Activated CD8-positive, alpha-beta memory T cell treated with anti-CD3 and anti-CD28 coated beads, Interleukin-2, amount 10 ng/mL, durations not matched to agents 7 days and 5 days (primary cell): ENCODE measurements at regions of chr1 and their contacts with region 1.

Region 1: GRCh38 chr1:223748773-223749733 is 36.7 kb downstream of the CAPN2 start:
- DNase-seq: peak; percentile 67
- ATAC-seq: peak; percentile 75
- H3K4me3 Mint-ChIP-seq: peak overlapping the region; percentile 57
- H3K27ac Mint-ChIP-seq: peak overlapping the region; percentile 78
- H3K4me1 Mint-ChIP-seq: peaks cover 30% of the 10 kb centered on the region
- H3K27me3 Mint-ChIP-seq: no peaks in the 10 kb centered on the region

Region 2: DNA sequence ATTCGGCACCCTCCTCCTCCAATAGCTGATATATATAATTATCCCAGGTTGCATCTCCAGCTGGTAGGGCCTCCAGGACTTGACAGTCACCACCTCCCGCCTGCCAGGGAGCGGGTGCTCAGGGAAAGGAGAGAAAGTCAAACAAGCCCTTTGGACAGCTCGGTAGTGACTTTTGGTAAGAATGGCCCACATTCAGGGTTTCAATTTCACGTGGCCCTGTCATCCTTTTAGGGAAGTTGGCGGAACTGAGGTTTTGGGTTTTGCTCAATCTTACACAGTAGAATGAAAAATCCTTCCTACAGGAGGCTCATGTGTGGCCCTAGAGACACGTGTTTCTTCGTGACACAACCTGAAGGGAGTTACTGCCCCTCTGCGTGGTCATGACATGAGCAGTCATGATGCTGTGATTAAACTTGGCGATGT is 127.7 kb before region 1 on chr1:
- CTCF ChIA-PET with region 1: no interaction called
- DNase-seq: no peak
- ATAC-seq: peak; percentile 27
- H3K4me3 Mint-ChIP-seq: no peak overlapping the region
- H3K27ac Mint-ChIP-seq: no peak overlapping the region
- H3K4me1 Mint-ChIP-seq: peaks cover 8% of the 10 kb centered on the region
- H3K27me3 Mint-ChIP-seq: peaks cover 35% of the 10 kb centered on the region

Region 3: DNA sequence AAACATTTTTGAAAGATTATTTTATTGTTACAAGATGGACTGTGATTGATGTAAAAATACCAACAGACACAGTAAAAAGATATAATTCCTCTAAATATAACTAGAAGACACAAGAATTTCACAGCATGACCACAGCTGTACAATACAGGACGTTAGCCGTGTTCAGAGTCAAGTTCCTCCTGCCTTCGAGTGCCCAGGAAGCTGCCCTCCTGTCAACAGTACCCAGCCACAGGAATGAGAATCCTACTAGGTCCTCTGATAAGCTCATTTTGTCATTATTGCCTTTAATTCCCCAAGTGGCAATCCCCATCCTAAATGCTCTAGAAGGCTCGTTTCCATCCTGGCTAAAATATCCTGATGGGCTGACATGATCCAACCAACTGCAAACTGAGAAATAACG is 53.1 kb before region 1 on chr1:
- CTCF ChIA-PET with region 1: interaction called, 76 read pairs
- DNase-seq: no peak
- ATAC-seq: no peak
- H3K4me3 Mint-ChIP-seq: no peak overlapping the region
- H3K27ac Mint-ChIP-seq: no peak overlapping the region
- H3K4me1 Mint-ChIP-seq: peaks cover 17% of the 10 kb centered on the region
- H3K27me3 Mint-ChIP-seq: no peaks in the 10 kb centered on the region

Region 4: GRCh38 chr1:223712194-223712849 is 36.7 kb before region 1 on chr1 and contains the start of gene CAPN2:
- CTCF ChIA-PET with region 1: interaction called, 76 read pairs
- DNase-seq: peak; percentile 75
- ATAC-seq: peak; percentile 65
- H3K4me3 Mint-ChIP-seq: peak within 1 kb of the TSS; percentile 84
- H3K27ac Mint-ChIP-seq: peak within 1 kb of the TSS; percentile 96
- H3K4me1 Mint-ChIP-seq: peaks cover 53% of the 10 kb centered on the region
- H3K27me3 Mint-ChIP-seq: no peaks in the 10 kb centered on the region
- total RNA-seq, gene CAPN2: 183 to 255 TPM

Region 5: GRCh38 chr1:223726380-223727001 is 22.6 kb before region 1 on chr1:
- CTCF ChIA-PET with region 1: interaction called, 43 read pairs
- DNase-seq: peak; percentile 94
- ATAC-seq: peak; percentile 99
- H3K4me3 Mint-ChIP-seq: peak overlapping the region; percentile 49
- H3K27ac Mint-ChIP-seq: peak overlapping the region; percentile 89
- H3K4me1 Mint-ChIP-seq: peaks cover 79% of the 10 kb centered on the region
- H3K27me3 Mint-ChIP-seq: no peaks in the 10 kb centered on the region

Region 6: GRCh38 chr1:223759273-223759672 is 10.2 kb after region 1 on chr1:
- CTCF ChIA-PET with region 1: interaction called, 23 read pairs
- DNase-seq: no peak
- ATAC-seq: no peak
- H3K4me3 Mint-ChIP-seq: no peak overlapping the region
- H3K27ac Mint-ChIP-seq: no peak overlapping the region
- H3K4me1 Mint-ChIP-seq: no peaks in the 10 kb centered on the region
- H3K27me3 Mint-ChIP-seq: no peaks in the 10 kb centered on the region

Region 7: DNA sequence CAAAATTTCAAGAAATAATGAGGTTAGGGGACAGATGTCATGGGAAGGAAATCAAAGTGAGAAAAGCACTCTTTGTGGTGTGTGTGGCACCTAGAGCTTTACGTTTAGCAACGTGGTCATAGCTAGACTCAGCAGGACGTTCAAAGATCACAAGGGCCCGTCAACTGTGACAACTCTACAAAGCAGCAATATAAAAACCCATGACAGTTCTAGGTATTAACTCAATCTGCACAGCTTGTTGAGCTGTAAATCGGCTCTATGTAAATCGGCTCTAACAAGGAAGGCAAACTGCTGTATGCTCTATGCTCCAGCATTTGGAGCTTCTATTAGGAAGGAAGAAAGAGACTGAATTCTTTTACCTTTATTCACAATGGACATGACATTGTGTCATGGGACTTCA is 31.9 kb after region 1 on chr1:
- CTCF ChIA-PET with region 1: interaction called, 12 read pairs
- DNase-seq: no peak
- ATAC-seq: no peak
- H3K4me3 Mint-ChIP-seq: no peak overlapping the region
- H3K27ac Mint-ChIP-seq: peak overlapping the region; percentile 26
- H3K4me1 Mint-ChIP-seq: peaks cover 16% of the 10 kb centered on the region
- H3K27me3 Mint-ChIP-seq: no peaks in the 10 kb centered on the region

Region 8: DNA sequence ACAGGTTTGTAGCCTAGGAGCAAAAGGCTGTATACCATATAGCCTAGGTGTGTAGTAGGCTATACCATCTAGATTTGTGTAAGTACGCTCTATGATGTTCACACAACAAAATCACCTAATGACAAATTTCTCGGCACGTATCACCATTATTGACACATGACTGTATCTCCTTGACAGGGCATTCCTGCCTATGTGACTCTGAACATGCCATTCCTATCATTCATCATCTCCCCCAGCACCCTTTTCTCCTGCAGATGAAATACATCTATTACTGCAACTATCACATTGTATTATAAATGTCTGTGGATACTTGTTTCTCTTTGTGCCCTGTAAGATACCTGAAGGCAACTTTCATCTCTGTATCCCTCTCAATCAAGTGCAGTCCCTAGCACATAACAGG is 66.8 kb after region 1 on chr1:
- CTCF ChIA-PET with region 1: no interaction called
- DNase-seq: no peak
- ATAC-seq: no peak
- H3K4me3 Mint-ChIP-seq: no peak overlapping the region
- H3K27ac Mint-ChIP-seq: no peak overlapping the region
- H3K4me1 Mint-ChIP-seq: peaks cover 16% of the 10 kb centered on the region
- H3K27me3 Mint-ChIP-seq: no peaks in the 10 kb centered on the region

Region 9: GRCh38 chr1:223845037-223845809 is 96.2 kb after region 1 on chr1:
- CTCF ChIA-PET with region 1: no interaction called
- DNase-seq: peak; percentile 69
- ATAC-seq: peak; percentile 32
- H3K4me3 Mint-ChIP-seq: peak overlapping the region; percentile 99
- H3K27ac Mint-ChIP-seq: peak overlapping the region; percentile 99
- H3K4me1 Mint-ChIP-seq: peaks cover 34% of the 10 kb centered on the region
- H3K27me3 Mint-ChIP-seq: no peaks in the 10 kb centered on the region

Region 10: DNA sequence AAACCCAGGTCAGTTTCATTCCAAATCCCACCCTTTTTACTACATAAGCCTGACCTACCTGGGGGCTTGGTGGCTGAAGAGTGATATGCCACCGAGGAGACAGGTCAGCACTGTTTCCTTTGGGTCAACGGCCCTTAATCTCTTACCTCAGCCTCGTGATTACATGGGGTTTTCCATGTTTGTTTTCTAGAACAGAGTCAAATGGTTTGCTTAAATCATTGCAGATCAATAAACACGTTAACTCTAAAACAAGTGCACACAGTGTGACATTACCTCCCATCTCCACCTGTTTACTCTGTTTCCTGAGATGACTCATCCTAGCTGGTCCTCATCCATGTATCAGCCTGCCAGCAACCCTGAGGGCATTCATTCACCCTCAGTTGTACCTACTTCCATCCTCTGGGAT is 137.5 kb after region 1 on chr1:
- CTCF ChIA-PET with region 1: no interaction called
- DNase-seq: no peak
- ATAC-seq: no peak
- H3K4me3 Mint-ChIP-seq: no peak overlapping the region
- H3K27ac Mint-ChIP-seq: no peak overlapping the region
- H3K4me1 Mint-ChIP-seq: no peaks in the 10 kb centered on the region
- H3K27me3 Mint-ChIP-seq: peaks cover 4% of the 10 kb centered on the region